ENCODE measurements at regions of chr1 and their contacts with region 1.

Region 1: GRCh38 chr1:22641906-22642636 is 1.4 kb upstream of the C1QC start:
- DNase-seq: peak; percentile 96

Region 2: GRCh38 chr1:22114083-22115012 is 527.7 kb before region 1 on chr1:
- intact Hi-C with region 1: loop called in 1 of 2 experiments (anchors 10 kb)
- DNase-seq: no peak

Region 3: DNA sequence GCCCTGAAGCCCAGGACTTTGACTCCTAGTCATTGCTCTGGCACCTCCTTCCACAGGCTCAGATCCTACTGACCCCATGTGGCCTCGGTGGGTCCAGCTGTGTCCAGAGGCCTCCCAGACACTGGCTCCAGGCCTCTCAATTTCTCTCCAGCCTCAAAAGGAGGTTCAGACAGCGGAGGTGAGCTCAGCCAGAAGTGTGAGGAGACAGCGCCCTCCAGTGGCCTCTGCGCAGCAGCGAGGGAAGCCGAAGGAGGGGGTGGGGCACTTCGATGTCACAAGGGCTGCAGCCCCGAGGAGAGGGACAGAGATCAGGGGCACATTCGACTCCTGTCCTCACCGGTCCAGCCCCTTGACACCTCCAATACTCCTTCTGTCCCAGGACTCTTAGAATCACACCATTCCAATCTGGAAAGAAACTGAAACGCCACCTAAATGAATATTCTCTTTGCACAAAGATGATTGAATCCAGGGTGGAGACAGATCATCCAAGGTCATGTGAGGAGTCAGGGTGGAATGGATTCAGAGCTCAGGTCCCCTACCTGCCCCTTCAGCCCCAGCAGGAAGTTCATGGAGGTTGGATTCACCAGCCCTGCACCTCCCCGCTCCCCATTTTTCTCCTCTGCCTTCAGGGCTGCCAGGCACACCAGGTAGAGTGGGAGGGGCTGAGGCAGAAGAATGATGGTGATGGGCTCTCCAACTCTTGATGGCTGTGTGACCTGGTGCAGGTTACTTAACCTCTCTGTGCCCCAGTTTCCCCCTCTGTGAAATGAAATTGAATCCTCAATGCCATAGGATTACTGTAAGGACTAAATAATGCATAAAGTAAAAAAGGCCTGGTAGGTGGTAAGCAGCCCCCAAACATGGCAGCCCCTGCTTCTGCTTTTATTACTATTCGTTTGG is 225.3 kb before region 1 on chr1:
- intact Hi-C with region 1: loop called (anchors 2 to 5 kb)
- DNase-seq: peak; percentile 91

Region 4: GRCh38 chr1:22527555-22528296 is 114.3 kb before region 1 on chr1:
- intact Hi-C with region 1: loop called (anchors 10 kb)
- DNase-seq: peak; percentile 70

Region 5: DNA sequence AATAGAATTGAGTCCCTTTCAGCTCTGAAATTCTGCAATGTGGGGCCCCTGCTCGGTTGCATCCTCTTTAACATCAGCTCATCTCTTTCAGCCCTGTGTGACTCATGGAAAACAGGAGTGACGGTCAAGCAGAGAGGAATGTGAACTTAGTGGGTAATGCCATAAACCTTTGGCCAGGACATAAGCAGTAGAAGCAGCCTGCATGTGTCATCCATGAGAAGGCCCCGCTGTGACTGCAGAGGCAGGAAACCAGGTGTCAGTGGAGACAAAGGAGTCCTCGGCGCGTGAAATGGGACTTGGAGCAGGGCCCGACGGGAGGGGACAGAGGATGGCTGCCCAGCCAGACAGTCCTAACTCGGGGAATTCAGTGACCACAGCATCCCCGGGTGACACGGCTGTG is 47.4 kb after region 1 on chr1:
- intact Hi-C with region 1: no loop called
- DNase-seq: no peak

Measured in posterior vena cava (tissue), 2 donors.